ENCODE measurements at regions of chr7 and their contacts with region 1.

Region 1: GRCh38 chr7:84188786-84189405 is 5.7 kb downstream of the SEMA3A start:
- DNase-seq: no peak
- ATAC-seq: peak in 2 of 4 donors; percentile 47 to 60
- H3K4me3 ChIP-seq: no peak overlapping the region
- H3K27ac ChIP-seq: no peak overlapping the region
- H3K4me1 ChIP-seq: peaks cover 0 to 7% (median 0%) of the 10 kb centered on the region in 12 donors
- H3K27me3 ChIP-seq: no peaks in the 10 kb centered on the region
- CTCF ChIP-seq: peak in 11 of 12 donors; percentile 15 to 62 (median 38)
- POLR2A ChIP-seq: no peak

Region 2: GRCh38 chr7:83970081-83970480 is 218.8 kb before region 1 on chr7:
- intact Hi-C with region 1: loop called in 8 of 10 experiments (anchors 5 to 10 kb)
- DNase-seq: no peak
- ATAC-seq: no peak
- H3K4me3 ChIP-seq: no peak overlapping the region
- H3K27ac ChIP-seq: no peak overlapping the region
- H3K4me1 ChIP-seq: no peaks in the 10 kb centered on the region
- H3K27me3 ChIP-seq: no peaks in the 10 kb centered on the region
- CTCF ChIP-seq: no peak
- POLR2A ChIP-seq: no peak

Region 3: DNA sequence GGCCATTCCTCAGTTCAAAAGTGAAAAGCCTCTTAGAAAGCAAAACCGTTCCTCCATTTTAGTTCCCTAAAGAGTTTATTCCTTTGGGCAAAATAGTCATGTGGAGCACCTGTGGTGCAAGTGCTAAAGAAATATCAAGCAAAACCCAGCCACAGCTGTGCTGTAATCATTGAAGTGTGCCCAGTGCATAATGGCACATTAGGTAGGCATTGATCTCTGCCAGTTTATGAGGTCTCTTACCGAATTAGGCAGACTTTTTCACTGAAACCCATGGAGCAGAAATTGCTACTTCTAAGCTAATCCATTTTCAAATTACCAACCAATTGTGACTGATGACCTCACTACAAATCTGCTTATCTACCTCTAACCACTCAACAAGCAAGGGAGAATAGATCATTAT is 102.9 kb after region 1 on chr7:
- intact Hi-C with region 1: no loop called
- DNase-seq: no peak
- ATAC-seq: no peak
- H3K4me3 ChIP-seq: no peak overlapping the region
- H3K27ac ChIP-seq: no peak overlapping the region
- H3K4me1 ChIP-seq: no peaks in the 10 kb centered on the region
- H3K27me3 ChIP-seq: no peaks in the 10 kb centered on the region
- CTCF ChIP-seq: no peak
- POLR2A ChIP-seq: no peak

Measured in heart left ventricle (tissue), 16 donors.